WTC11 (cell line): ENCODE measurements at regions of chr12 and their contacts with region 1.

Region 1: GRCh38 chr12:57124259-57124877 is 3.9 kb upstream of the LRP1 start:
- DNase-seq: peak; percentile 84
- ATAC-seq: peak; percentile 59
- H3K4me3 Mint-ChIP-seq: no peak overlapping the region
- H3K27ac Mint-ChIP-seq: no peak overlapping the region
- H3K4me1 Mint-ChIP-seq: peaks cover 15% of the 10 kb centered on the region
- H3K27me3 Mint-ChIP-seq: peaks cover 6% of the 10 kb centered on the region
- CTCF ChIP-seq: peak; percentile 92

Region 2: DNA sequence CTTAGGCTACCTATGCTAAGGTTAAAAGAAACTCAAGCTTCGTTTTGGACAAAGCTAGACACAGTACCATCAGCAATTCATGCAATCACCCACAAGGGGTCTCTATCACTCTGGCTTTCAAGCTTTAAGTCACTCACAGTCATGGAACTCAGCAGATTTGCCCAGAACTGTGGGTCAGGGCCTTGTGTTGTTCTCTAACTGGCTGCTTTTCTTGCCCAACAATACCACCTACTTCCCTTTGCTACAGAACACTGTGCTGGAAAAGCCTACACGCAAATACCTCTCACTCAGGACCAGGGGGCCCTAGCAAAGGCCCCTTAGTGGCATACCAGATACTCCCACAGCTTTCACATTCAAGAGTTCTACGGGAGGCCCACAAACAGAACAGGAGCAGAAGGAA is 54.8 kb before region 1 on chr12:
- CTCF ChIA-PET with region 1: interaction called, 16 read pairs
- POLR2A ChIA-PET with region 1: no interaction called
- DNase-seq: peak; percentile 50
- ATAC-seq: peak; percentile 99
- H3K4me3 Mint-ChIP-seq: no peak overlapping the region
- H3K27ac Mint-ChIP-seq: peak overlapping the region; percentile 34
- H3K4me1 Mint-ChIP-seq: no peaks in the 10 kb centered on the region
- H3K27me3 Mint-ChIP-seq: no peaks in the 10 kb centered on the region
- CTCF ChIP-seq: peak; percentile 64

Region 3: GRCh38 chr12:57088459-57089248 is 35.7 kb before region 1 on chr12 and contains the start of gene NAB2:
- CTCF ChIA-PET with region 1: interaction called, 17 read pairs
- POLR2A ChIA-PET with region 1: interaction called, 6 read pairs
- DNase-seq: peak; percentile 91
- ATAC-seq: peak; percentile 46
- H3K4me3 Mint-ChIP-seq: peak within 1 kb of the TSS; percentile 88
- H3K27ac Mint-ChIP-seq: peak within 1 kb of the TSS; percentile 100
- H3K4me1 Mint-ChIP-seq: peaks cover 40% of the 10 kb centered on the region
- H3K27me3 Mint-ChIP-seq: no peaks in the 10 kb centered on the region; the same call in 1 of the 2 replicates
- CTCF ChIP-seq: no peak
- total RNA-seq, gene NAB2: 16.5 to 20.5 TPM (median 17.2 TPM) in 3 replicates

Region 4: DNA sequence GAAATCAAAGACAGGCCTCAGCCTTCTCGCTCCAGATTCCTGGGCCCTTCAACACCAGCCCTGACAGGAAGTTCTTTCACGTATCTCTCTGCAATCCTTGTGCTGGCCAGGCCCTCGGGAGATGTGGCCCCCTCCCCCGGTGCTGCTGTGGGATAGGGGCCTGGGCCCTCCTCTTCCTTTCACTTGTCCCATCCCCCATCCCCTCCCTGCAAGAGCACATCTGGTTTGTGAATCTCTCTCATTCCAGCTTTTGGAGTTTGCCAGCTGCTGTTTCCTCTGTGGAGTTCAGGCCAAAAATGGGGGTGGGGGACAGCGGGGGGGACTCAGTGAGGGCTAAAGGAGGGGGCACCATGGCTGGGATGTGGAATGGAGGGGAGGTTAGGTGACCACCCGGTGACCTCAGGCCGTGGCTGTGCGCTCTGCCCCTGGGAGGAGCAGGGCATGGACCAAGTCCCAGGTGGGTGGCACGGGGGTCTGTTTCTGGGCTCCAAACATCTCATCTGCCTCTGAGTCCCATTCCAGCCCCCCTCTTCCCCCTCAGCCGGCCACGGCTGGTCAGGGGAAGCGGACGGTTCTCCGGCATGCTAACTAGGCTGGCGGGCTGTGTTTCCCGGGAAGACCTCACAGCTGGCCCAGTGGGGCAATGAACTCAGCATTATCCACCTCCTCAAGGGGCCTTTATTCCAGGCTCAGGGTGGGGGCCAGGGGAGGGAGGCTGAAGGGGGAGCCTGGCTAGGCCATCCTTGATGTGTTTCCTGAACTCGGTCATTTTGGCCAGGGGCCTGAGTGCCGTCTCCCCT is 11.4 kb after region 1 on chr12:
- CTCF ChIA-PET with region 1: interaction called, 11 read pairs
- POLR2A ChIA-PET with region 1: interaction called, 3 read pairs
- DNase-seq: peak; percentile 54
- ATAC-seq: peak; percentile 55
- H3K4me3 Mint-ChIP-seq: peak overlapping the region; percentile 40
- H3K27ac Mint-ChIP-seq: peak overlapping the region; percentile 96
- H3K4me1 Mint-ChIP-seq: peaks cover 57% of the 10 kb centered on the region
- H3K27me3 Mint-ChIP-seq: no peaks in the 10 kb centered on the region
- CTCF ChIP-seq: no peak

Region 5: GRCh38 chr12:57175428-57176138 is 51.2 kb after region 1 on chr12:
- CTCF ChIA-PET with region 1: interaction called, 112 read pairs
- POLR2A ChIA-PET with region 1: interaction called, 8 read pairs
- DNase-seq: peak; percentile 95
- ATAC-seq: peak; percentile 80
- H3K4me3 Mint-ChIP-seq: no peak overlapping the region
- H3K27ac Mint-ChIP-seq: peak overlapping the region; percentile 78
- H3K4me1 Mint-ChIP-seq: no peaks in the 10 kb centered on the region
- H3K27me3 Mint-ChIP-seq: no peaks in the 10 kb centered on the region
- CTCF ChIP-seq: peak; percentile 75

Region 6: GRCh38 chr12:57182921-57183790 is 58.8 kb after region 1 on chr12:
- CTCF ChIA-PET with region 1: interaction called, 43 read pairs
- POLR2A ChIA-PET with region 1: interaction called, 3 read pairs
- DNase-seq: peak; percentile 90
- ATAC-seq: peak; percentile 96
- H3K4me3 Mint-ChIP-seq: no peak overlapping the region
- H3K27ac Mint-ChIP-seq: peak overlapping the region; percentile 99
- H3K4me1 Mint-ChIP-seq: peaks cover 4% of the 10 kb centered on the region
- H3K27me3 Mint-ChIP-seq: no peaks in the 10 kb centered on the region
- CTCF ChIP-seq: peak; percentile 81; the same call in 1 of the 2 replicates

Region 7: GRCh38 chr12:57229634-57230380 is 105.4 kb after region 1 on chr12 and contains the start of gene SHMT2:
- CTCF ChIA-PET with region 1: interaction called, 14 read pairs
- POLR2A ChIA-PET with region 1: interaction called, 15 read pairs
- DNase-seq: peak; percentile 97
- ATAC-seq: peak; percentile 41
- H3K4me3 Mint-ChIP-seq: peak within 1 kb of the TSS; percentile 98
- H3K27ac Mint-ChIP-seq: peak within 1 kb of the TSS; percentile 94
- H3K4me1 Mint-ChIP-seq: peaks cover 49% of the 10 kb centered on the region
- H3K27me3 Mint-ChIP-seq: peaks cover 53% of the 10 kb centered on the region
- CTCF ChIP-seq: no peak
- total RNA-seq, gene SHMT2: 262 to 297 TPM (median 265 TPM) in 3 replicates

Region 8: GRCh38 chr12:57272337-57273151 is 148.2 kb after region 1 on chr12:
- CTCF ChIA-PET with region 1: no interaction called
- POLR2A ChIA-PET with region 1: no interaction called
- DNase-seq: no peak
- ATAC-seq: no peak
- H3K4me3 Mint-ChIP-seq: no peak overlapping the region
- H3K27ac Mint-ChIP-seq: peak overlapping the region; percentile 34
- H3K4me1 Mint-ChIP-seq: no peaks in the 10 kb centered on the region
- H3K27me3 Mint-ChIP-seq: no peaks in the 10 kb centered on the region
- CTCF ChIP-seq: no peak

Region 9: GRCh38 chr12:57309420-57309819 is 185.1 kb after region 1 on chr12:
- CTCF ChIA-PET with region 1: no interaction called
- POLR2A ChIA-PET with region 1: no interaction called
- DNase-seq: no peak
- ATAC-seq: no peak
- H3K4me3 Mint-ChIP-seq: no peak overlapping the region
- H3K27ac Mint-ChIP-seq: no peak overlapping the region
- H3K4me1 Mint-ChIP-seq: no peaks in the 10 kb centered on the region
- H3K27me3 Mint-ChIP-seq: no peaks in the 10 kb centered on the region
- CTCF ChIP-seq: no peak